ENCODE measurements at regions of chr20 and their contacts with region 1.

Region 1: GRCh38 chr20:57329608-57330221 is at the start of gene SPO11:
- DNase-seq: peak; percentile 67 to 79
- H3K4me3 ChIP-seq: no peak within 1 kb of the TSS
- H3K4me3 Mint-ChIP-seq: peak within 1 kb of the TSS; percentile 42
- H3K27ac Mint-ChIP-seq: peak within 1 kb of the TSS; percentile 68
- H3K4me1 ChIP-seq: peaks cover 52% of the 10 kb centered on the region
- H3K4me1 Mint-ChIP-seq: peaks cover 38% of the 10 kb centered on the region
- H3K27me3 ChIP-seq: no peaks in the 10 kb centered on the region
- H3K27me3 Mint-ChIP-seq: no peaks in the 10 kb centered on the region
- CTCF ChIP-seq: peak; percentile 41 to 80
- total RNA-seq, gene SPO11: not detected in 2 replicates

Region 2: DNA sequence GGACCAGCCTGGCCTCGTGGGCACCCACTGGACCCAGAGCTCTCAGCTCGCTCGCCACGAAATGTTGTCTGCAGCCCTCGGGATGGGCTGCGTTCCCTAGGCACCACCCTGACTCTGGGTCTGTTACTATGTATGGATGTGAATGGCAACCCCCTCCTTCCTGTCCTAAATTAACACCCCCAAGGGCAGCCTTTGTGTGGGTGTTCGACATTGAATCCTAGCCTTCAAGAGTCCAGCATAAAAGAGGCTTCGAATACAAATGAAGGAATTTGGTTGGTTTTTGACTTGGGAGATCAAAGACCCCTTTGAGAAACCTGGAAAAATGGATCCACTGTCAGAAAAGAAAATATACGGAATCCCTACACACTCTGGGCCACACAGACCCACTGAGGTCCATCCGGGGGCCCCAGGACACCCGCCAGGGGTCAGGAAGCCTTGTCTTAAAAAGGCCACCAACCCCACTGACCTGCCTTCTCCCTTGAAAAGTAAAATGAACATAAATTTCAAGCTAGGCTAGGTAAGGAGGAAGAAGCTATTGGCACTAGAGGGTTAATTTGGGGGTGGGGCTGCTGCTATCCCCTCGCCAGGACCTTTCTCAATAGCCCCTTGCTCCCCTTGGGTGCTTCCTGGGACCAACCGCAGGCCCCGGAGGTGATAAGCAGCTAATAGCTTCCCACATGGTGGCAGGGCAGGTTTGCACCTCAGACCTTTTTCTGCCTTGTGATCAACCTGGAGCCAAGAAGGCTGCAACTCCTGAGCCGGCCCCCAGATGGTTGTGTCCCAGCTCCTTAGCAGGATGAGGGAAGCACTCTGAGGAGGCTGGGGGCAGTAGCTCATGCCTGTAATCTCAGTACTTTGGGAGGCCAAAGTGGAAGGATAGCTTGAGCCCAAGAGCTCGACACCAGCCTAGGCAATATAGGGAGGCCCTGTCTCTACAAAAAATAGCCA is 149.0 kb before region 1 on chr20:
- CTCF ChIA-PET with region 1: interaction called, 11 read pairs
- POLR2A ChIA-PET with region 1: no interaction called
- intact Hi-C with region 1: loop called (anchors 2 kb)
- DNase-seq: peak in 1 of 2 experiments; percentile 54
- H3K4me3 ChIP-seq: no peak overlapping the region
- H3K4me3 Mint-ChIP-seq: no peak overlapping the region
- H3K27ac Mint-ChIP-seq: no peak overlapping the region
- H3K4me1 ChIP-seq: no peaks in the 10 kb centered on the region
- H3K4me1 Mint-ChIP-seq: no peaks in the 10 kb centered on the region
- H3K27me3 ChIP-seq: no peaks in the 10 kb centered on the region
- H3K27me3 Mint-ChIP-seq: no peaks in the 10 kb centered on the region
- CTCF ChIP-seq: peak in 1 of 2 experiments; percentile 4

Region 3: GRCh38 chr20:57244627-57245214 is 85.0 kb before region 1 on chr20:
- CTCF ChIA-PET with region 1: interaction called, 48 read pairs
- POLR2A ChIA-PET with region 1: interaction called, 6 read pairs
- intact Hi-C with region 1: loop called (anchors 1 kb)
- DNase-seq: peak; percentile 74 to 80
- H3K4me3 ChIP-seq: no peak overlapping the region
- H3K4me3 Mint-ChIP-seq: no peak overlapping the region
- H3K27ac Mint-ChIP-seq: peak overlapping the region; percentile 53
- H3K4me1 ChIP-seq: peaks cover 20% of the 10 kb centered on the region
- H3K4me1 Mint-ChIP-seq: peaks cover 29% of the 10 kb centered on the region
- H3K27me3 ChIP-seq: no peaks in the 10 kb centered on the region
- H3K27me3 Mint-ChIP-seq: no peaks in the 10 kb centered on the region
- CTCF ChIP-seq: peak; percentile 60 to 83

Region 4: DNA sequence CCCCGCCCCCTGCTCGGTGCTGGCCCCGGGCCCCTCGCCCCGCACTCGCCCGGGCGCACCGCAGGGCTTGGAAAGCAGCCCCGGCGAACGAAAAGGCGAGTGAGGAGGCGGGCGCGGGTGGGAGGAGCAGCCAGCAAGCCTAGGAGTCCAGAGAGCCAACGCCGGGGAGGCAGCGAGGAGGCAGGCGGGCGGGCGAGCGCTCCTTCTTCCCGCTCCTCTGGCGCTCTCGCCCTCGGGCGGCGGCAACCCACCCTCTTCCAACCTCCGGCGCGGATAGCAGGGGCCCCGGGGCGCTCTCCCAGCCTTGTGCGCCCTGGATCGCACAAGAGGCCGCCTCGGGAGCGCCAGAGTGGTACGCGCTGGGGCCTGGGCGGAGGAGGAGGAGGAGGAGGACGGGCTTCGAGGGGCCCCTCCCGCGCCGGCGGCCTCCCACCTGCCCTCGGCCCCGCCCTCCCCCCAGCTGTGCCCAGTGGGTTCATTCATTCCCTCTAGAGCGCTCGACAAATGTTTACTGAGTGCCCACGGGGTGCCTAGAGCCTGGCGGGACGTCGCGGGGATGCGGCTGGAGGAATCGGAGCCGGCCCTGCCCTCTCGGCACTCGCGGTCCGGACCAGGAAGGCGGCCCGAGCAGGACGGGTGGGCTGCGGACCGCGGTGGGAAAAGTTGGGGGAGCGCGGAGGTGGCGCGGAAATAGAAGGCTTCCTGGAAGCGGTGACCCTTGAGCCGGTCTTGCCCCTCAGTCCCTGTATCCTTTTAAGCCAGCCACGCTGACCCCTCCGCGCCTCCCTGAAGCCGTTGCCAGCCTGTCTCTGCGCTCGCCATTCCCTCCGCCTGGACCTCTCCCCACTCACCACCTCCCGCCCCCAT is 63.2 kb before region 1 on chr20 and contains the start of gene BMP7:
- CTCF ChIA-PET with region 1: interaction called, 74 read pairs
- POLR2A ChIA-PET with region 1: interaction called, 5 read pairs
- intact Hi-C with region 1: loop called (anchors 1 kb)
- DNase-seq: peak; percentile 79 to 84
- H3K4me3 ChIP-seq: peak within 1 kb of the TSS; percentile 94
- H3K4me3 Mint-ChIP-seq: peak within 1 kb of the TSS; percentile 93
- H3K27ac Mint-ChIP-seq: peak within 1 kb of the TSS; percentile 72
- H3K4me1 ChIP-seq: peaks cover 48% of the 10 kb centered on the region
- H3K4me1 Mint-ChIP-seq: peaks cover 61% of the 10 kb centered on the region
- H3K27me3 ChIP-seq: no peaks in the 10 kb centered on the region
- H3K27me3 Mint-ChIP-seq: no peaks in the 10 kb centered on the region
- CTCF ChIP-seq: no peak
- total RNA-seq, gene BMP7: 266 and 317 TPM in 2 replicates

Region 5: GRCh38 chr20:57290749-57291402 is 38.8 kb before region 1 on chr20:
- CTCF ChIA-PET with region 1: interaction called, 29 read pairs
- POLR2A ChIA-PET with region 1: interaction called, 7 read pairs
- intact Hi-C with region 1: loop called (anchors 1 kb)
- DNase-seq: peak in 1 of 2 experiments; percentile 66
- H3K4me3 ChIP-seq: no peak overlapping the region
- H3K4me3 Mint-ChIP-seq: no peak overlapping the region
- H3K27ac Mint-ChIP-seq: peak overlapping the region; percentile 28
- H3K4me1 ChIP-seq: peaks cover 91% of the 10 kb centered on the region
- H3K4me1 Mint-ChIP-seq: peaks cover 76% of the 10 kb centered on the region
- H3K27me3 ChIP-seq: no peaks in the 10 kb centered on the region
- H3K27me3 Mint-ChIP-seq: no peaks in the 10 kb centered on the region
- CTCF ChIP-seq: peak; percentile 51 to 74

Region 6: DNA sequence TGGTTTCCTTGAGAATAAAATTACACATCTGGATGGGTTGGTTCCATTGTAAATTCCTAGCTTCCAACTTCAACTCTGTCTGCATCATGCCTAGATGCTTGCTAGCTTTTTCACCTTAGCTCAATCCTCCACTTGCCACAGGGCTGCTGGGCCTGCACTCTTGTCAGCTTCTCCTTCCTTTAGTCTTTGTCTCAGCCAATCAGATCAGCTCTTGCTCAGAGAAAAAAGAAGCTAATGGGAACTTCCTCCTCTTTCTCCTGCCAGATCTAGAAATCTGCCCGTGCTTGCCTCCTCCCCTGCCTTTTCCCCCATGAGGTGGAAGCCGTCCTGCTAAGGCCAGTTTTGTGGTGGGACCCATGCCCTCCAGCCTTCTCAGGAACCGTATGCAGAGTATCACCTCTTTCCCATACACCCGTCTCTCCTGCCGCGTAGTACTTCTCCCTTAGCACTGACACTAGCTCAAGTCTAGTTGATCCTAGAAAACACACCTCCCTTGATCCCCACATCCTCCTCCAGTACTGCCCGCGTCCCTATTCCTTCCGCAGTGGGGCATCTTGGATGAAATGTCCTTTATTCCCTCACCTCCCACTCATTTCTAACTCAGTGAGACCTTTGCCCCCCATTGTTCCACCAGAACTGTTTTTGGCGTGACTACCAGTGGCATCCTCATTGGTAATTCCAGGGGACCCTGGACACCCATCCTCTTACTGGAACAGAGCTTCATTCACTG is 40.0 kb after region 1 on chr20:
- CTCF ChIA-PET with region 1: no interaction called
- POLR2A ChIA-PET with region 1: no interaction called
- intact Hi-C with region 1: no loop called
- DNase-seq: peak in 1 of 2 experiments; percentile 34
- H3K4me3 ChIP-seq: no peak overlapping the region
- H3K4me3 Mint-ChIP-seq: no peak overlapping the region
- H3K27ac Mint-ChIP-seq: no peak overlapping the region
- H3K4me1 ChIP-seq: no peaks in the 10 kb centered on the region
- H3K4me1 Mint-ChIP-seq: no peaks in the 10 kb centered on the region
- H3K27me3 ChIP-seq: no peaks in the 10 kb centered on the region
- H3K27me3 Mint-ChIP-seq: no peaks in the 10 kb centered on the region
- CTCF ChIP-seq: no peak

Region 7: DNA sequence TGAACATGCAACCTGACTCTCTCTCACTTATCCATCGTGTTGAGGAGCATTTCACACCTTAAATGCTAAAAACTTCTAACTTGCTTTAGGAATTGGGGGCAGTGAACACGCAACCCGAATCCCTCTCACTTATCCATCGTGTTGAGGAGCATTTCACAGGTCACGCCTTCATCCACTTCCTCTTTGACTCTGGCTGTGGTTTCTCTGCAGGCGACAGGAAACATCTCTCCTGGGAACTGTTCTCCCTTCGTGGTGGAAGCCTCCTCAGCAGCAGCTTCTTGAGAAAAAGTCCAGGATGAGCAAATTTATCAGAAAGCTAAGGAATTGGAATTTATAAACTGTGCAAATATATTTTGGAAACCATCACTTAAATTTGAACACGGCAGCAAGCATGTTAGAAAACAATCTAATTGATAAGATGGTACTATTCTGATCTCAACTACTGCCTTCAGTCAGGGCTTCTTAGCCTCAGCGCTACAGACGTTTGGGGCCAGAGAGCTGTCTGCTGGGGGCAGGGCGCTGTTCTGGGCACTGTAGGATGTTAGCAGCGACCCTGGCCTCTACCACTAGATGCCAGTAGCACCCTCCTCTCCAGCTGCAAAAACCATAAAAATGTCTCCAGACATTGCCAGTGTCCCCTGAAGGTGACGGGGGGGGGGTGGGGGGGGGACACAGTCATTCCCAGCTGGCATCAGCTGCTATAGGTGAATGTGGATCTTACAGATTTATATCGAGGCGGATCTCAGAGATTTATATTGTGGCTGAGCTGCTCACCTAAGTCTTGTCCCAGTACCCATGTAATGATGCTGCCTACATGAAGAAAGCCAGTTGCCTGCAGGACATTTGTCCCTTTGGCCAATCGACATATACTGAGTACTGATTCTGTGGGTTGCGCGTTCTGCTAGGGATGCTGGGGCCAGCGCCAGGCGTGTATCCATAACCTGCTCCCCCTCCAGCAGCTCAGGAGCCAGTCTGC is 169.0 kb after region 1 on chr20:
- CTCF ChIA-PET with region 1: no interaction called
- POLR2A ChIA-PET with region 1: no interaction called
- intact Hi-C with region 1: no loop called
- DNase-seq: peak in 1 of 2 experiments; percentile 65
- H3K4me3 ChIP-seq: no peak overlapping the region
- H3K4me3 Mint-ChIP-seq: no peak overlapping the region
- H3K27ac Mint-ChIP-seq: no peak overlapping the region
- H3K4me1 ChIP-seq: peaks cover 6% of the 10 kb centered on the region; the same call in 1 of the 2 replicates
- H3K4me1 Mint-ChIP-seq: peaks cover 19% of the 10 kb centered on the region
- H3K27me3 ChIP-seq: peaks cover 2% of the 10 kb centered on the region
- H3K27me3 Mint-ChIP-seq: peaks cover 17% of the 10 kb centered on the region
- CTCF ChIP-seq: peak; percentile 43 to 73

Measured in Caco-2 (cell line).